Activated T-helper 2 cell treated with anti-CD3 and anti-CD28 coated beads, Interferon-gamma antibody, Interleukin-2, Interleukin-4, amounts not matched to agents 10 μg/mL and 5 μg/mL and 100 μg/mL, durations not matched to agents 14 hours and 24 hours and 36 hours (primary cell): ENCODE measurements at regions of chr17 and their contacts with region 1.

Region 1: DNA sequence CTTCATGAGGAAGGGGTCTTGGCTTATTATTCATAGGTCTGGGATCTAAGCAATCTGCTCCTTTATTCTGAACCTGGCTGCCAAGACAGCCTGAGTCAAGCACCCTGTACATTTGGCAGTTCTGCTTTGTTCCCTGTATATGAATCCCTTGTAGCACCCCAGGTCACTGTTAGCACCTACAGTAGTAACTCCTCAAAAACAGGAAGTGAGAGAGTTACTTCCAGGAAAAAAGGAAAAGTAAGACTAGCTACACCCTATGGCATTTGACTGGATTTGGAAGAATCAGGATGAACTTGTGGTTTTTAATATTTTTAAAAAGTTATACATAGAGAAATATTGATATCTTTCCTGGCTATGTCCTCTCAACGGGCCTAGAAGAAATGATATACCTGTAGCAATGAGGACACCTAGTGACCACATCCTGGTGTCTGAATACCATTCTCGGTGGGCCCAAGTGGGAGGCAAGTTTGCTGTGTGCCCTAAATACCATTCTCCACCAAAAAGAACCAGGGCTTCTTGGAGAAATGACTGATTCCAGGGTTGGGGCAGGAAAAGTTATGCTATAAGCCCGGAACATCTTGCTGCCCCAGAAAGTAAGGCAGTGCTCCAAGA is 9.9 kb downstream of the ANKRD40 start:
- DNase-seq: no peak
- H3K4me3 Mint-ChIP-seq: no peak overlapping the region
- H3K27ac Mint-ChIP-seq: no peak overlapping the region
- H3K4me1 Mint-ChIP-seq: peaks cover 11% of the 10 kb centered on the region
- H3K27me3 Mint-ChIP-seq: no peaks in the 10 kb centered on the region

Region 2: DNA sequence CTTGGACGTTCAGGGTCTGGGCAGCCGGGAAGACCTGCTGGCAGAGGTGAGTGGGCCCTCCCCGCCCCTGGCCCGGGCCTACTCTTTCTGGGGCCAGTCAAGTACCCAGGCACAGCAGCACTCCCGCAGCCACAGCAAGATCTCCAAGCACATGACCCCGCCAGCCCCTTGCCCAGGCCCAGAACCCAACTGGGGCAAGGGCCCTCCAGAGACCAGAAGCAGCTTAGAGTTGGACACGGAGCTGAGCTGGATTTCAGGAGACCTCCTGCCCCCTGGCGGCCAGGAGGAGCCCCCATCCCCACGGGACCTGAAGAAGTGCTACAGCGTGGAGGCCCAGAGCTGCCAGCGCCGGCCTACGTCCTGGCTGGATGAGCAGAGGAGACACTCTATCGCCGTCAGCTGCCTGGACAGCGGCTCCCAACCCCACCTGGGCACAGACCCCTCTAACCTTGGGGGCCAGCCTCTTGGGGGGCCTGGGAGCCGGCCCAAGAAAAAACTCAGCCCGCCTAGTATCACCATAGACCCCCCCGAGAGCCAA is 71.7 kb before region 1 on chr17:
- intact Hi-C with region 1: loop called (anchors 5 kb)
- DNase-seq: peak; percentile 40
- H3K4me3 Mint-ChIP-seq: no peak overlapping the region
- H3K27ac Mint-ChIP-seq: no peak overlapping the region
- H3K4me1 Mint-ChIP-seq: peaks cover 4% of the 10 kb centered on the region
- H3K27me3 Mint-ChIP-seq: peaks cover 32% of the 10 kb centered on the region

Region 3: DNA sequence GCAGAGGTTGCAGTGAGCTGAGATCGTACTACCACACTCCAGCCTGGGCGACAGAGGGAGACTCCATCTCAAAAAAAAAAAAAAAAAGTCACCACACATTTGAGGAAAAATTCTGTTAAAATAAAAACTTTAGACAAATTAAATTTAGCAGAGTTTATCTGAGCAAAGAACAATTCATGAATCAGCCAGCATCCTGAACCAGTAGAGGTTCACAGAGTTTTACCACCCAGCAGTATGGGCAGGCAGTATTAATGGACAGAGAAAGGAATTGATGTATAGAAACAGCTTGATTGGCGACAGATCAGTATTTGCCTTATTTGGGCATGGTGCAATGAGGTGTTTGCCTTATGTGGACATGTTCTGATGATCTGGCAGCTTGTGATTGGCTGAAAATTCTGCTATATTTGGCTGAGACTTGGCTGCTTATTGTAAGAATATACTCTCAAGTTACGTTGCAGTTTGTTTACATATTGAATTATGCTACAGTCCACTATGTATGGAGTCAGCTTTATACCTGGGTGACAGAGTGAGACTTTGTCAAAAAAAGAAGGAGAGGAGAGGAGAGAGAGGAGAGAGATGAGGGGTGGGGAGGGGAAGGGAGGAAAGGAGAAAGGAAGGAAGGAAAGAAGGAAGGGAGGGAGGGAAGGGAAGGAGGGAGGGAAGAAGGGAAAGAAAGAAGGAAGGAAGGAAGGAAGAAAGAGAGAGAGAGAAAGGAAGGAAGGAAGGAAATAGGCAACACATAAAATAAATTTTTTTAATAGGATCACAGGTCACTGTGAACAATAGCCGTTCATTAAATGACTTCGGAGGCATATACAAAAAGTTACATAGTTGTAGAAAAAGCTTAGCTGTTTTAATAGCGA is 48.5 kb before region 1 on chr17:
- intact Hi-C with region 1: no loop called
- DNase-seq: no peak
- H3K4me3 Mint-ChIP-seq: no peak overlapping the region
- H3K27ac Mint-ChIP-seq: no peak overlapping the region
- H3K4me1 Mint-ChIP-seq: no peaks in the 10 kb centered on the region
- H3K27me3 Mint-ChIP-seq: peaks cover 20% of the 10 kb centered on the region